ENCODE measurements at regions of chr4 and their contacts with region 1.

Region 1: DNA sequence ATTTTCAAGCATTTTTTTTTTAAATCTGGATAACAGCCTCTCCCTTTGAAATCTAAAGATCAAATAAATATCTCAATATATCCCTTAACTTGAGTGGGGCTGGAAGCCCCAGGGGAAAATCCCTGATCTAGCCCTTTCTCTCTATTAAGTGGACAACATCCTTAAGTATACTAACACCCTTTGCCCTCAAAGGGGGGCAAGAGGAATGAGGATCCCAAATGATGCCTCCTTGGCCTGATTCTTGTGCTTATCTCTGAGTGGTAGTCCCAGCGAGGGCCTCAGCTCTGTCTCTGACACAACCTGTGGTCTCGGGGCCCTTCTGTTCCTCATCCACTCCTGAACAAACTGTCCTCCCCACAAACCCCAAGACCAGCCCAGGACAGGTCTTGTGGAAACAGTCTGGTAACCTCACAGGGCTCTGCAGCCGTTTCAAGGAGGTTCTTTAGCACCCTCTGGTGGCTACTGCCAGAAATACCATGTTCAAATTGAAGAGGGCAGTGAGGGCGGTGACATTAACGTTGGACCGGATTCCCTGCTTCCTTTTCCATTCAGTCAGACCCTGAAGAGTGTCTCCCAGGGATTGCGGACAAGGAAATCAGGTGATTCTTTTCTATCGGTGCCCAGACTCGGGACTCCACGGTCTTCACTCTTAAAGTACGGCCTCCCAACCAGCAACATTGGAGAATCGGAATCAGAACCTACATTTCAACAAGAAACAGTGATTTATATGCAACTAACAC is 12.9 kb downstream of the CXCL13 start:
- DNase-seq: peak in 8 of 10 donors; percentile 49 to 72 (median 62)
- H3K4me3 ChIP-seq: peak overlapping the region in 45 of 59 donors; percentile 3 to 61 (median 37)
- H3K27ac ChIP-seq: peak overlapping the region in 8 of 59 donors; percentile 5 to 54 (median 24)
- H3K27me3 ChIP-seq: peaks cover 0 to 5% (median 0%) of the 10 kb centered on the region in 45 donors
- CTCF ChIP-seq: peak; percentile 58 to 88 (median 80)

Region 2: GRCh38 chr4:76969941-76970529 is 648.5 kb before region 1 on chr4:
- intact Hi-C with region 1: no loop called
- DNase-seq: no peak
- H3K4me3 ChIP-seq: no peak overlapping the region
- H3K27ac ChIP-seq: peak overlapping the region in 1 of 59 donors; percentile 4
- H3K27me3 ChIP-seq: no peaks in the 10 kb centered on the region
- CTCF ChIP-seq: no peak

Region 3: GRCh38 chr4:77697860-77698590 is 79.5 kb after region 1 on chr4:
- intact Hi-C with region 1: loop called in 1 of 2 experiments (anchors 5 kb)
- DNase-seq: peak in 1 of 10 donors; percentile 18
- H3K4me3 ChIP-seq: peak overlapping the region in 8 of 59 donors; percentile 14 to 36 (median 17)
- H3K27ac ChIP-seq: no peak overlapping the region
- H3K27me3 ChIP-seq: no peaks in the 10 kb centered on the region
- CTCF ChIP-seq: peak in 54 of 56 donors; percentile 27 to 72 (median 51)